WTC11 (cell line): ENCODE measurements at regions of chr1 and their contacts with region 1.

Region 1: GRCh38 chr1:111990878-111991718 is 1.6 kb upstream of the KCND3 start:
- DNase-seq: peak; percentile 67
- ATAC-seq: peak; percentile 81
- H3K4me3 Mint-ChIP-seq: peak overlapping the region; percentile 76
- H3K27ac Mint-ChIP-seq: no peak overlapping the region
- H3K4me1 Mint-ChIP-seq: peaks cover 26% of the 10 kb centered on the region
- H3K27me3 Mint-ChIP-seq: peaks cover 61% of the 10 kb centered on the region
- CTCF ChIP-seq: no peak

Region 2: DNA sequence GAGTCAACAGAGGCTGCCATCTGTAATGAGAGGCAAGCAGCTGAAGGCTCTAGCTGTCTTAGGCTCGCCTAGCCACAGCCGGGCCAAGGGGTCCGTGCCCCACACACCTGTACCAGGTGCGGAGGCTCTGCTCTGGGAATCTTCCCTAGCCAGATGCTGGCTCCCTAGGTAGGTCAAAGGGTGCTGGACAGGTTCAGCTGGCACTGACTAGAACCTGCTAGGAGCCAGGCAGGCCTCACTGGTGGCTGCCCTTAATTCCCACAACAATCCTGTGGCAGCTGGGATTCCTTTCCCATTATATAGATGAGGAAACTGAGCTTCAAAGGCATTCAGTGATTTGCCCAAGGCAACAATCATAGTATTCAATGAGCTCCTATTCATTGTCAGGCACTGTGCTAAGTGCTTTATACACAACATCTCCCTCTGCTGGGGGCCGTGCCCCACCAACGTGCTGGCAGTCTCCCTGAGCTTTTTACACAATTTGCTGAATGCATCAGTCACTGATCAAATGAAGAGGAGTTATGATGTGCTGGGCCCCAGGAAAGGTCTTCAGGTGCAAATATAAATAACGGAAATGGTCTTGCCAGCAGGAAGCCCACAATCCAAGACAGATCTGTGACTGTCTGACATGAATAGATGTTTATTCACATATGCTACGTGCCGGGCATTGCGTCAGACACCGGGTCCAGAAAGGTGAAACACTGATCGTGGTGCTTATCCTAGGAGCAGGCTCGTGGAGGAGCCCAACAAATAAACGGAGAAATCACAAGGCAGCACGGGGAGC is 177.4 kb before region 1 on chr1:
- CTCF ChIA-PET with region 1: interaction called, 10 read pairs
- POLR2A ChIA-PET with region 1: no interaction called
- DNase-seq: peak; percentile 27
- ATAC-seq: peak; percentile 24; the same call in 1 of the 2 replicates
- H3K4me3 Mint-ChIP-seq: no peak overlapping the region
- H3K27ac Mint-ChIP-seq: no peak overlapping the region
- H3K4me1 Mint-ChIP-seq: 0 out of 2 replicates have a peak, but pooled peaks cover 4% of the 10 kb centered on the region
- H3K27me3 Mint-ChIP-seq: 0 out of 2 replicates have a peak, but pooled peaks cover 3% of the 10 kb centered on the region
- CTCF ChIP-seq: no peak